ENCODE measurements at regions of chr14 and their contacts with region 1.

Region 1: DNA sequence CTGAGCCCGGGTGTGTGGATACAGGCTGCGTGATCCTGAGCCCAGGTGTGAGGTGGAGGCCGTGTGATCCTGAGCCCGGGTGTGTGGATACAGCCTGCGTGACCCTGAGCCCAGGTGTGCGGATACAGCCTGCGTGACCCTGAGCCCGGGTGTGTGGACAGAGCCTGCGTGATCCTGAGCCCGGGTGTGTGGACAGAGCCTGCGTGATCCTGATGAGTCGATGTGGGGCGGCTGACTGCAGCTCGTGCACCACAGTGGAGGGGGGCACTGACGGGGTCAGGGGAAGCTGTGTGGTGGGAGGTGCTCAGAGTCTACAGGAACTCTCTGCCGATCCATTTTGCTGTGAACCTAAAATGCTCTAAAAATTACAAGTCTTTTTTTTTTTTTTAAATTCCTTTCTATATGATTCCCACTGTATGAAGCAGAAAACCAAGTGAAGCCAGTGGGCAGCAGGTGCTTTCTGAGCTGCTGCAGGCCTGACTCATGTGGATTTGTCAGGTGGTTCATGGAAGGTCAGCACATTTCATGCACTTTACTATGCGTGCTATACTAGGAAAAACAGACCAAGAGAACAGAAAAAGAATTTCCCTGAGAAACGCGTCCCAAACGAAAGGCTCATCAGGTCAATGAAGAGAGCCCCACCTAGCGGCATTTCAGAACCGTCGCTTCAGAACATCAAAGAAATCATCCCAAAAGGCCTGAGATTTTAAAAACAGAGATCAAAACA is 19.3 kb downstream of the BRF1 start:
- DNase-seq: no peak
- ATAC-seq: peak; percentile 66
- H3K4me3 ChIP-seq: no peak overlapping the region
- H3K27ac ChIP-seq: no peak overlapping the region
- H3K4me1 ChIP-seq: no peaks in the 10 kb centered on the region
- H3K27me3 ChIP-seq: no peaks in the 10 kb centered on the region
- CTCF ChIP-seq: peak; percentile 84

Region 2: GRCh38 chr14:104973300-104974145 is 308.0 kb before region 1 on chr14:
- CTCF ChIA-PET with region 1: no interaction called
- POLR2A ChIA-PET with region 1: interaction called, 10 read pairs
- in situ Hi-C with region 1: no loop called
- intact Hi-C with region 1: no loop called
- DNase-seq: peak; percentile 89
- ATAC-seq: peak; percentile 54
- H3K4me3 ChIP-seq: peak overlapping the region in 1 of 2 experiments; percentile 35; a peak in 2 of 4 replicates
- H3K27ac ChIP-seq: peak overlapping the region; percentile 93
- H3K4me1 ChIP-seq: peaks cover 54% of the 10 kb centered on the region
- H3K27me3 ChIP-seq: no peaks in the 10 kb centered on the region
- CTCF ChIP-seq: no peak

Region 3: GRCh38 chr14:105090493-105091053 is 191.0 kb before region 1 on chr14:
- CTCF ChIA-PET with region 1: no interaction called
- POLR2A ChIA-PET with region 1: no interaction called
- in situ Hi-C with region 1: no loop called
- intact Hi-C with region 1: loop called (anchors 10 kb)
- DNase-seq: no peak
- ATAC-seq: peak; percentile 61
- H3K4me3 ChIP-seq: no peak overlapping the region; a peak in 1 of 4 replicates
- H3K27ac ChIP-seq: peak overlapping the region; percentile 86
- H3K4me1 ChIP-seq: peaks cover 46% of the 10 kb centered on the region
- H3K27me3 ChIP-seq: no peaks in the 10 kb centered on the region
- CTCF ChIP-seq: peak; percentile 95

Region 4: GRCh38 chr14:105203057-105203531 is 78.4 kb before region 1 on chr14:
- CTCF ChIA-PET with region 1: no interaction called
- POLR2A ChIA-PET with region 1: no interaction called
- in situ Hi-C with region 1: no loop called
- intact Hi-C with region 1: loop called (anchors 5 kb)
- DNase-seq: peak; percentile 7
- ATAC-seq: peak; percentile 70
- H3K4me3 ChIP-seq: no peak overlapping the region
- H3K27ac ChIP-seq: no peak overlapping the region
- H3K4me1 ChIP-seq: peaks cover 4% of the 10 kb centered on the region; the same call in 1 of the 2 replicates
- H3K27me3 ChIP-seq: no peaks in the 10 kb centered on the region
- CTCF ChIP-seq: peak; percentile 94

Measured in Panc1 (cell line).